ENCODE measurements at regions of chr20 and their contacts with region 1.

Region 1: DNA sequence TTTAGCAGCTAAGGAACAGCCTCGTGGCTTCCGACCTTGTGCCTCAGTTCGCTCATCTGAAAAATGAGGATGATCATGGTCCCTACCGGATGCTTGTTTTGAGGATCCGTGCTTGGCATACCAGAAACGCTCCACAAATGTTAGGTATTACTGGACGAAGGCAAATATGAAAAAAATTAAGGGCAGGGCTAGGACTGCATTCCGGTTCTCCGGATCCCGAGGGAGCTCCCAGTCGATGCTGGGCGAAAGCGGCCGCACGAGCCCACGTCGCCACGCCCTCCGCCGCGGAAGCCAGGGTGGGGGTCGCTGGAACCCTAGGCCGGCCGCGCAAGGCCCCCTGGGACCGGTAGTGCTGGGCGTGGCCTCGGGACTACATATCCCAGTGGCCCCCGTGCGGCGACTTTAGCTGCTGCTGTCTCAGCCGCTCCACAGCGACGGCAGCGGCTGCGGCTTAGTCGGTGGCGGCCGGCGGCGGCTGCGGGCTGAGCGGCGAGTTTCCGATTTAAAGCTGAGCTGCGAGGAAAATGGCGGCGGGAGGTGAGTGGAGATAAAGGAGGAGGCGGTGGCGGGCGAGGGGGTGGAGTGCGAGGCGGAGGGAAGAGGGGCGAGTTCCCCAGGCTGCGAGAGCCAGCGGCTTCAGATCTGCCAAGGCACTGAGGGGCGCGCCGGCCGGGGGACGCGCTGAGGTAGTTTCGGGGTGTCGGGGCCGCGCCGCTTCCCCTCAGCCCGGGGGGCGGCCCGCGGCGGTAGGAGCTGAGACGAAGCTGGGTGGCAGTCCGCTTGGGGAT is at the start of gene NCOA3:
- DNase-seq: peak; percentile 83 to 90 (median 86)
- H3K4me3 ChIP-seq: peak within 1 kb of the TSS; percentile 68 to 70
- H3K4me3 Mint-ChIP-seq: peak within 1 kb of the TSS; percentile 90 to 99 (median 96)
- H3K27ac ChIP-seq: peak within 1 kb of the TSS; percentile 75
- H3K27ac Mint-ChIP-seq: peak within 1 kb of the TSS; percentile 91 to 97 (median 95)
- H3K4me1 ChIP-seq: peaks cover 39% of the 10 kb centered on the region
- H3K4me1 Mint-ChIP-seq: peaks cover 28 to 57% (median 39%) of the 10 kb centered on the region in 4 donors
- H3K27me3 ChIP-seq: no peaks in the 10 kb centered on the region
- H3K27me3 Mint-ChIP-seq: no peaks in the 10 kb centered on the region
- total RNA-seq, gene NCOA3: 69.0 to 74.7 TPM

Region 2: GRCh38 chr20:47356526-47357295 is 145.0 kb before region 1 on chr20 and contains the start of gene ZMYND8:
- CTCF ChIA-PET with region 1: no interaction called
- POLR2A ChIA-PET with region 1: interaction called, 27 read pairs
- intact Hi-C with region 1: loop called (anchors 5 kb)
- DNase-seq: peak; percentile 92 to 100 (median 97)
- H3K4me3 ChIP-seq: peak within 1 kb of the TSS; percentile 39 to 59
- H3K4me3 Mint-ChIP-seq: peak within 1 kb of the TSS; percentile 91 to 98 (median 96)
- H3K27ac ChIP-seq: peak within 1 kb of the TSS; percentile 76
- H3K27ac Mint-ChIP-seq: peak within 1 kb of the TSS; percentile 92 to 100 (median 99)
- H3K4me1 ChIP-seq: peaks cover 70% of the 10 kb centered on the region
- H3K4me1 Mint-ChIP-seq: peaks cover 13 to 55% (median 30%) of the 10 kb centered on the region in 4 donors
- H3K27me3 ChIP-seq: no peaks in the 10 kb centered on the region
- H3K27me3 Mint-ChIP-seq: no peaks in the 10 kb centered on the region
- total RNA-seq, gene ZMYND8: 47.7 to 48.5 TPM

Region 3: DNA sequence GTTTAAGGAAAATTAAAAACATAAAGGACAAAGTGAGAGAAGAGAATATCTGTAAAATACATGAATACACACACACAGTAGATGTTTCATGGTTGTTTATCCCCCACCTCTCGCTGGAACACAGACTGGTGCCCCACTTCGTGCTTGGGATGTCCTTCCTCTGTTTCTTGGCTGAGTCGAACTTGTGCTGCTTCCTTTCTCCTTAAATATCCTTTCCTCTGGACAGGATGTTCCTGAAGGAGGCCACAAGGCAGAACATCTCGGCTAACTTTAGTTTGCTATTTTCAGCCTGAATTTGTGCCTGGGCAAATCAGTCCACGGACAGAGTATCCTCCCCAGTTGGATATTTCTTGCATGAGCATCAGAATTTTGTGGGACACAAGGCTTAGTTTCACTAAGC is 90.5 kb before region 1 on chr20:
- CTCF ChIA-PET with region 1: interaction called, 3 read pairs
- POLR2A ChIA-PET with region 1: interaction called, 5 read pairs
- intact Hi-C with region 1: loop called (anchors 2 kb)
- DNase-seq: no peak
- H3K4me3 ChIP-seq: no peak overlapping the region
- H3K4me3 Mint-ChIP-seq: no peak overlapping the region
- H3K27ac ChIP-seq: no peak overlapping the region
- H3K27ac Mint-ChIP-seq: no peak overlapping the region
- H3K4me1 ChIP-seq: peaks cover 29% of the 10 kb centered on the region
- H3K4me1 Mint-ChIP-seq: peaks cover 11 to 31% (median 23%) of the 10 kb centered on the region in 4 donors
- H3K27me3 ChIP-seq: no peaks in the 10 kb centered on the region
- H3K27me3 Mint-ChIP-seq: no peaks in the 10 kb centered on the region

Region 4: GRCh38 chr20:47453142-47453782 is 48.4 kb before region 1 on chr20:
- CTCF ChIA-PET with region 1: no interaction called
- POLR2A ChIA-PET with region 1: no interaction called
- intact Hi-C with region 1: no loop called
- DNase-seq: no peak
- H3K4me3 ChIP-seq: no peak overlapping the region
- H3K4me3 Mint-ChIP-seq: no peak overlapping the region
- H3K27ac ChIP-seq: no peak overlapping the region
- H3K27ac Mint-ChIP-seq: peak overlapping the region in 1 of 7 donors; percentile 8
- H3K4me1 ChIP-seq: no peaks in the 10 kb centered on the region
- H3K4me1 Mint-ChIP-seq: peaks cover 0 to 4% (median 0%) of the 10 kb centered on the region in 4 donors
- H3K27me3 ChIP-seq: no peaks in the 10 kb centered on the region
- H3K27me3 Mint-ChIP-seq: no peaks in the 10 kb centered on the region

Region 5: GRCh38 chr20:47487175-47487917 is 14.3 kb before region 1 on chr20:
- CTCF ChIA-PET with region 1: interaction called, 13 read pairs
- POLR2A ChIA-PET with region 1: interaction called, 108 read pairs
- intact Hi-C with region 1: loop called (anchors 1 kb)
- DNase-seq: peak; percentile 51 to 89 (median 61)
- H3K4me3 ChIP-seq: no peak overlapping the region
- H3K4me3 Mint-ChIP-seq: peak overlapping the region; percentile 39 to 77 (median 54)
- H3K27ac ChIP-seq: peak overlapping the region; percentile 55
- H3K27ac Mint-ChIP-seq: peak overlapping the region; percentile 53 to 92 (median 87)
- H3K4me1 ChIP-seq: peaks cover 32% of the 10 kb centered on the region
- H3K4me1 Mint-ChIP-seq: peaks cover 16 to 30% (median 23%) of the 10 kb centered on the region in 4 donors
- H3K27me3 ChIP-seq: no peaks in the 10 kb centered on the region
- H3K27me3 Mint-ChIP-seq: no peaks in the 10 kb centered on the region

Region 6: DNA sequence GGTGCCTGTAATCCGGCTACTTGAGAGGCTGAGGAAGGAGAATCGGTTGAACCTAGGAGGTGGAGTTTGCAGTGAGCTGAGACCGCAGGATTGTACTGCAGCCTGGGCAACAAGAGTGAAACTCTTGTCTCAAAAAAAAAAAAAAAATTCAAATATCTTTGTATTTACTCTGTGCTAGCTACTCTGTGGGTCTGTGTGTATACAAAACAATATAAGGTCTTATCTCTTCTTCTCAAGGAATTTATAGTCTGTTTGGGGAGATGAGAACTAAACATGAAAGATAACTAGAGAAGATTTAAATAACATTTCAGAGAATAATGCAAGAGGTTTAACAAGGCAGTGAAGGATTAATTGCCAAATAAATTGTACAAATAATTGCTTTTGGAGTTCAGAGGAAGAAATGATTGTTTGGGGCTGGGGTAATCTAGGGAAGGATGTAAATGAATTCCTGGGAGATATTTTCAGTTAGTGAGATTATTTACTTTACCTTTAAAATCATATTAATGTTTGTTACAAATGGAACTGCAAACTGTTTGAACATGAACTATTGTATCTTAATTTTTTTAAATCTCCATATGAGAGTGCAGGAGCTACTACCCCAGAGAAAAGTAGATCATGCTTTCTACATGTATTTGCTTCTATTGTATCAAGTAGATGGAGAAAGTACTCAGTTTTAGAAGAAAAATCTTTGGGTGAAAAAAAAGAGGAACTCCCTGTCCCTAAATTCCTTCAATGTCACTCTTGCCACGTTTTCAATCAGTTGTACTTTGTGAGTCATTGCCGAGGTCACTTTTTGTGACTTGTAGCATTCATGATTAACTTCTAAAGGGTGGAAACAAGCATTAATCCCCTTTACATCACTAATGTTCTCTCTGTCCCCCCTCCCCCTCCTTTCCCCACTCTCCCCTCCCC is 39.0 kb after region 1 on chr20:
- CTCF ChIA-PET with region 1: interaction called, 3 read pairs
- POLR2A ChIA-PET with region 1: interaction called, 5 read pairs
- intact Hi-C with region 1: loop called (anchors 5 kb)
- DNase-seq: no peak
- H3K4me3 ChIP-seq: no peak overlapping the region
- H3K4me3 Mint-ChIP-seq: peak overlapping the region in 4 of 8 donors; percentile 0 to 20 (median 8)
- H3K27ac ChIP-seq: no peak overlapping the region
- H3K27ac Mint-ChIP-seq: peak overlapping the region in 5 of 7 donors; percentile 38 to 83 (median 58)
- H3K4me1 ChIP-seq: peaks cover 48% of the 10 kb centered on the region
- H3K4me1 Mint-ChIP-seq: peaks cover 43 to 80% (median 63%) of the 10 kb centered on the region in 4 donors
- H3K27me3 ChIP-seq: no peaks in the 10 kb centered on the region
- H3K27me3 Mint-ChIP-seq: no peaks in the 10 kb centered on the region

Region 7: GRCh38 chr20:47610247-47610944 is 108.7 kb after region 1 on chr20:
- CTCF ChIA-PET with region 1: no interaction called
- POLR2A ChIA-PET with region 1: interaction called, 7 read pairs
- intact Hi-C with region 1: loop called (anchors 5 kb)
- DNase-seq: peak; percentile 30 to 93 (median 44)
- H3K4me3 ChIP-seq: no peak overlapping the region
- H3K4me3 Mint-ChIP-seq: peak overlapping the region in 7 of 8 donors; percentile 18 to 85 (median 61)
- H3K27ac ChIP-seq: peak overlapping the region; percentile 33
- H3K27ac Mint-ChIP-seq: peak overlapping the region; percentile 77 to 97 (median 94)
- H3K4me1 ChIP-seq: peaks cover 65% of the 10 kb centered on the region
- H3K4me1 Mint-ChIP-seq: peaks cover 53 to 77% (median 66%) of the 10 kb centered on the region in 4 donors
- H3K27me3 ChIP-seq: no peaks in the 10 kb centered on the region
- H3K27me3 Mint-ChIP-seq: no peaks in the 10 kb centered on the region

Region 8: DNA sequence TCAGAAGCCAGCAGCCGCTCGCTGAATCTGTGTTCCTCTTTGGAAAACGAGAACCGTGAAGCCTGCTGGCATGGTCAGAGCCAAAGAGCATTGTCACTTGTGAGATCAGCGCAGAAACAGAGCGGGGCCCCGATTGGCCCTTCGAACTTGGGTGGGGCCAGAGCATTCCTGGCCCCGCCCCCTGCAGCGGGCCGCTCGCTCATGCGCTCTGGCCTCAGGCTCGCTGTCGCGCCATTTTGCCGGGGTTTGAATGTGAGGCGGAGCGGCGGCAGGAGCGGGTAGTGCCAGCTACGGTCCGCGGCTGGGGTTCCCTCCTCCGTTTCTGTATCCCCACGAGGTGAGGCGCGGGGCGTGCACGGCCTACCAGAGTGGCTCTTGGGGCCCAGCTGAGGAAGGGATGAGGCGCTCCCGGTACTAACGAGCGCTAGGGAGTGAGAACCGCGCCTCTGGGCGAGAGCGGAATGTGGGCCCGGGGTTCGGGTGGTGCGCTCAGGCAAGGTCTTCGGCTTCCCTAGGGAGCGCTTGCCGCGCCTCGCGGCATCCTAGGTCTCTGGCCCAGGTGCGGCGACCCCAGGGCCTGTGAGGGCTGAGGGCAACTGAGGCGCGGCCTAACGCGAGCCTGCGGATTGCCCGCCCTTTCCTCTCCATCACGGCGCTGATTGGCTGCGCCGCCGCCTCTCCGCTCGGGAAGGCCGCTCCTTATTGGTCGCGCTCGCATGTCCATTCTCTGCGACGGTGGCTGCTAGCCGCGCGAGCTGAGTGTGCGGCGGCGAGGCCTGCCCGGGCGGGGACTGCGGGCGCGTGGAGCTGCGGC is 1544.6 kb after region 1 on chr20 and contains the start of gene CSE1L:
- CTCF ChIA-PET with region 1: no interaction called
- POLR2A ChIA-PET with region 1: no interaction called
- intact Hi-C with region 1: loop called (anchors 10 kb)
- DNase-seq: peak; percentile 93 to 97 (median 94)
- H3K4me3 ChIP-seq: peak within 1 kb of the TSS; percentile 99 to 100
- H3K4me3 Mint-ChIP-seq: peak within 1 kb of the TSS; percentile 97 to 99 (median 98)
- H3K27ac ChIP-seq: peak within 1 kb of the TSS; percentile 87
- H3K27ac Mint-ChIP-seq: peak within 1 kb of the TSS; percentile 98 to 99 (median 99)
- H3K4me1 ChIP-seq: peaks cover 40% of the 10 kb centered on the region
- H3K4me1 Mint-ChIP-seq: peaks cover 24 to 49% (median 38%) of the 10 kb centered on the region in 4 donors
- H3K27me3 ChIP-seq: no peaks in the 10 kb centered on the region
- H3K27me3 Mint-ChIP-seq: no peaks in the 10 kb centered on the region
- total RNA-seq, gene CSE1L: 44.5 to 45.8 TPM